Activated B cell treated with CpG ODN at 0.5 μM for 24 hours (primary cell): ENCODE measurements at regions of chr15 and their contacts with region 1.

Region 1: DNA sequence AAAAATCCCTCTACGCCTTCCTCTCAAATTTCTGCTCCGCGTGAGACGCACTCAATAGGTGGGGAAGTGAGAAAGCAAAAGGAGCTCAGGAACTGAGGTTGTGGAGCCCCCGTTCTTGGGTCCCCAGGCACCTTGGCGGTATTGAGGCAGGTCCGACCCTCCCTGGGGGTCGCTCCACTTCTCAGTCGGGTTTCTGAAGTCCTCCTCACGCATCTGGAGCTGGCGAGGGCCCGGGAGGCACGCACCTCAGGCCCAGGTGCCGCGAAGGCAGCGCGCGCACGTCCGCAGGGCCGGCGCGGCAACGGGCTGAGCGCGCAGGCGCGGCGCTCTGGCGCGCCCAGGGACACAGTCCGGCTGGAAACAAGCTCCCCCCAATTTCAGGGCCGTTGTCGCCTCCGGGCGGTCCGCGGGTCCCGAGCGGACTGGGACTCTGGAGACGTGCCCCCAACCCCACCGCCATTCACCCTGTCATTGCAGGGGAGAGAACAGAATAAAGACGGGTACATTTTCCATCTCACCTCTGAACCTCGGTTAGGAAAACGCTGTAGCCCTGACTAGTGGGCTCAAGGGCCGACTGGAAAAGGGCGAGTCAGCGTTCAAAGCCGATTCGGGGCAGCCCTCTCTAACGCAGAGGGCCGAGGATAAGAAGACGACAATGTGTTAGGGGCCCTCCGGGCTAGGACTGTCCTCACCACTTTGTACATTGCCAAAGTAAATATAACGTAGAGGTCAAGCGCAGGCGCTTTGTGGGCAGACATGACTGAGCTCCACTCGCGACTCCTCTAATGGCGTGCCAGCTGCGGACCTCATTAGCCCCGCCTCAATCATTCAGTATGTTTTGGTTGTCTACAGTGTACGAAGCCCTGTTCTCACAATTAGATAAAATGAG is at the start of gene ZNF770:
- DNase-seq: peak; percentile 92
- ATAC-seq: peak; percentile 85
- H3K4me3 Mint-ChIP-seq: peak within 1 kb of the TSS; percentile 98
- H3K27ac Mint-ChIP-seq: peak within 1 kb of the TSS; percentile 98
- H3K4me1 Mint-ChIP-seq: peaks cover 37% of the 10 kb centered on the region
- H3K27me3 Mint-ChIP-seq: no peaks in the 10 kb centered on the region
- CTCF ChIP-seq: no peak
- total RNA-seq, gene ZNF770: 46.8 TPM in 2 replicates

Region 2: DNA sequence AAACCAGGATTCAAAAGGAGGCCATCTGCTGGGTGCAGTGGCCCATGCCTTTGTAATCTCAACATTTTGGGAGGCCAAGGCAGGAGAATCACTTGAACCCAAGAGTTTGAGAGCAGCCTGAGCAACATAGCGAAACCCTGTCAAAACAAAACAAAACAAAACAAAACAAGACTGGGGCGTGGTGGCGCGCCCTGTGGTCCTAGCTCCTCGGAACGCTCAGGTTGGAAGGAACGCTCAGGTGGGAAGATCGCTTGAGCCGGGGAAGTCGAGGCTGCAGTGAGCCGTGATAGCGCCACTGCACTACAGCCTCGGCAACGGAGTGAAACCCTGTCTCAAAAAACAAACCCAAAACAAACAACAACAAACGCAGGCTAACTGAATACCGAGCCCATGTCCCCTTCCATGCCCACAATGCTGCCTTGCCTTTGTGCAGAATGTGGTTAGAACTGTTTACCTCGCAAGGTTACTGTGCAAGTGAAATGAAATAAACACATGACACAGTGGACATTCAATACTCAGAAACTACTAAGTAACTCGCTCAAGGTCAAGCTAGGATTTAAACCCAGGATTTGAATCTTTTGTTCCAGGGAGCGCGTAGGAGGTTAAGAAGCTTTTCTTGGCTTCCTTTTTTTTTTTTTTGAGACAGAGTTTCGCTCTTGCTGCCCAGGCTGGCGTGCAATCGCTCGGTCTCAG is 764.2 kb before region 1 on chr15:
- CTCF ChIA-PET with region 1: no interaction called
- POLR2A ChIA-PET with region 1: no interaction called
- intact Hi-C with region 1: loop called (anchors 1 kb)
- DNase-seq: no peak
- ATAC-seq: peak; percentile 7
- H3K4me3 Mint-ChIP-seq: peak overlapping the region; percentile 92
- H3K27ac Mint-ChIP-seq: peak overlapping the region; percentile 96
- H3K4me1 Mint-ChIP-seq: peaks cover 27% of the 10 kb centered on the region
- H3K27me3 Mint-ChIP-seq: peaks cover 1% of the 10 kb centered on the region
- CTCF ChIP-seq: no peak

Region 3: DNA sequence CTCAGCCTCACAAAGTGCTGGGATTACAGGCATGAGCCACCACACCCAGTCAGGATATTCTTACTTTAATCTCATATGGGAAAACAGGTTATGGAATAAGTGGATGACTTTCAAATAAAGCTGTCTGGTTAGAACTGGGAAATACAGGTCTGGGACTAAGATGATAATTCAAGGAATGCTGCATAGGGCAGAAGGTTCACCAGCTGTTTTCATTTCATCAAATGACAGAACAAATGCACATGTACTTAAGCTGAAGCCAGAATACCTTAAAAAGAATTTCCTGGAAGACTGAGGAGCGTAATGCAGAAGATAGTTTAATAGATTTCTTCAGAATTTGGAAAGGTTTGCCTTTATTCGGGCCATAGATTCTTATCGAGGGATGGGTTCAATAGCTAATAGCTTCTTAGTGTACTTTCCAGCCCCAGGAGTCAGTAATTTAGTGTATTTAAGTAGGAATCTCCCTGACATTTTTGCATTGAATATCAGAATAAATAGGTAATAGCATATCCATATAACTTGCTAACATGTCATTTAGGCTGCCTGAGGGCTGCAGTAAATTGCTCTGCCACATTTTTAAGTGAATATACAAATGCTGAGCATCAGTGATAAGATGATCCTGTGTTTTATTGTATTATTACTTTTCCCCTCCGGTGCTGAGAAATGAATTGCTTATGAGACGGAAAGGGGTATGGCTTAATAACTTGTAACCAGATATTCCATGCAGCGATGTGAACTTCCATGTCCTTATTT is 40.2 kb after region 1 on chr15:
- CTCF ChIA-PET with region 1: no interaction called
- POLR2A ChIA-PET with region 1: no interaction called
- intact Hi-C with region 1: no loop called
- DNase-seq: no peak
- ATAC-seq: no peak
- H3K4me3 Mint-ChIP-seq: no peak overlapping the region
- H3K27ac Mint-ChIP-seq: no peak overlapping the region
- H3K4me1 Mint-ChIP-seq: no peaks in the 10 kb centered on the region
- H3K27me3 Mint-ChIP-seq: peaks cover 2% of the 10 kb centered on the region
- CTCF ChIP-seq: no peak

Region 4: GRCh38 chr15:36579792-36580431 is 1591.7 kb after region 1 on chr15:
- CTCF ChIA-PET with region 1: no interaction called
- POLR2A ChIA-PET with region 1: no interaction called
- intact Hi-C with region 1: loop called (anchors 2 kb)
- DNase-seq: no peak
- ATAC-seq: peak; percentile 19
- H3K4me3 Mint-ChIP-seq: peak overlapping the region; percentile 93
- H3K27ac Mint-ChIP-seq: peak overlapping the region; percentile 96
- H3K4me1 Mint-ChIP-seq: peaks cover 22% of the 10 kb centered on the region
- H3K27me3 Mint-ChIP-seq: peaks cover 2% of the 10 kb centered on the region
- CTCF ChIP-seq: no peak